ENCODE measurements at regions of chr3 and their contacts with region 1.

Region 1: DNA sequence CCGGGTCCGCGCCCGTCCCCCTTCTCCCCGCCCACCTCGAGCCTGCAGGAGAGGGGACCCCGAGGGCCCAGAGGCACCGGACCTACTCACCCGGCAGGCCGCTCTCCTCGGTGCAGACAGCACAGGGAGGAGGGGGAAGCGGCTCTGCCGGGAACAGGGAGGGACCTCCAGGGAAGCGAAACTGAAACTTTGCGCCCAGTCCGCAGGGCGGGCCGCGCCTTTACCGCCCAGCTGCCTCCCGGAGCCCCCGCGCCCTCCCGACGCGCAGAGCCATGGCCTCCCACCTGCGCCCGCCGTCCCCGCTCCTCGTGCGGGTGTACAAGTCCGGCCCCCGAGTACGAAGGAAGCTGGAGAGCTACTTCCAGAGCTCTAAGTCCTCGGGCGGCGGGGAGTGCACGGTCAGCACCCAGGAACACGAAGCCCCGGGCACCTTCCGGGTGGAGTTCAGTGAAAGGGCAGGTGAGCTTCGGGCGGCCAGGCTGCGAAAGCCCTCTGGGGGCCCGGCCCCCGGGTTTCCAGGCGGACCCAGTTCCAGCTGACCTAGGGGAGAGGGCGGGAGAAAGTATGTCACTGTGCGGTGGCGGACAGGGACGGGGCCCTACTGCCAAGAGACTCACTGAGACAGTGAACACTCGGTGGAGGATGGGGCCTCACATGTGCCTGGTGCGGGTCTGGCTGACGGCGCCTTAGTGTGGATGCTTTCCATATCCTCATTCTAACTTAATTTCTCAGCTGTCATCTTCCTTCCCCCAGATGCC is at the starts of genes DTX3L and PARP9:
- DNase-seq: peak; percentile 47 to 95 (median 76)
- ATAC-seq: peak; percentile 91
- H3K4me3 ChIP-seq: peak within 1 kb of the TSS; percentile 92
- H3K4me3 Mint-ChIP-seq: peak within 1 kb of the TSS; percentile 95
- H3K27ac ChIP-seq: peak within 1 kb of the TSS; percentile 83 to 88
- H3K27ac Mint-ChIP-seq: peak within 1 kb of the TSS; percentile 89
- H3K4me1 ChIP-seq: peaks cover 67% of the 10 kb centered on the region
- H3K4me1 Mint-ChIP-seq: peaks cover 85% of the 10 kb centered on the region
- H3K27me3 ChIP-seq: no peaks in the 10 kb centered on the region
- H3K27me3 Mint-ChIP-seq: no peaks in the 10 kb centered on the region
- CTCF ChIP-seq: no peak
- total RNA-seq, gene DTX3L: 15.4 to 18.6 TPM
- total RNA-seq, gene PARP9: 13.2 to 14.4 TPM

Region 2: DNA sequence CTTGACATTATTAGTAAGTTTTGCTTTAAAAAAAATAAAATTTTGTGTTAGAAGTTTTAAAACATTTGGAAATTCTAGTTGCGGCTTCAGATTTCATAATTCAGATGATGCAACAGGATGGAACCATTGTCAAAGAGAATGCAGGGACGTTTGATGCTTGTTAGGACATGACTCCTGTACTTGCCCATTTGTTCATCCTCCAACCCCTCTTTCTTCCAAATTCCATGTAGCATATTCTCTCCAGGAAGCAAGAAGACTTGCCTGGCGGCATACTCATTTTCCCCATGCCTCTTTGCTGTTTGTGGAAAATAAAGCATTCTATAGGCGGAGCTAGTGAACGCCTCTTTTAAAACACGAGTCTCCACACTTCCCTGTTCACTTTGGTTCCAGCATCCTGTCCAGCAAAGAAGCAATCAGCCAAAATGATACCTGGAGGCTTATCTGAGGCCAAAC is 239.4 kb before region 1 on chr3 and contains the start of gene CSTA:
- CTCF ChIA-PET with region 1: no interaction called
- POLR2A ChIA-PET with region 1: no interaction called
- intact Hi-C with region 1: no loop called
- DNase-seq: peak in 1 of 14 experiments; percentile 21
- ATAC-seq: no peak
- H3K4me3 ChIP-seq: peak within 1 kb of the TSS; percentile 11
- H3K4me3 Mint-ChIP-seq: no peak within 1 kb of the TSS
- H3K27ac ChIP-seq: no peak within 1 kb of the TSS
- H3K27ac Mint-ChIP-seq: no peak within 1 kb of the TSS
- H3K4me1 ChIP-seq: peaks cover 15% of the 10 kb centered on the region
- H3K4me1 Mint-ChIP-seq: peaks cover 22% of the 10 kb centered on the region
- H3K27me3 ChIP-seq: no peaks in the 10 kb centered on the region
- H3K27me3 Mint-ChIP-seq: no peaks in the 10 kb centered on the region
- CTCF ChIP-seq: no peak
- total RNA-seq, gene CSTA: 1.2 to 1.4 TPM

Region 3: DNA sequence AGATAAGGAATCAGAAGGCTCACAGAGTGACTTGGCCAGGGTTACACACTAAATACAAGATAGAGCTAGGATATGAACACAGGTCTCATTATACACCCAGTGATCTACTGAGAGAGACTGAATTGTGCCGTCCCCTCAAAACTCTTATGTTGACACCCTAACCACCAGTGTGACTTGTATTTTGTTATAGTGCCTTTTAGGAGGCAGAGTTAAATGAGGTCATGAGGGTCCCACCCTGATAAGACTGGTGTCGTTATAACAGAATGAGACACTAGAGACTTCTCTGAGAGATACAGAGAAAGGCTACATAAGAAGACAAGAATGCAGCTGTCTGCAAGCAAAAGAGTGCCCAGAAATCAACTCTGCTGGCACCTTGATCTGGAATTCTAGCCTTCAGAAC is 62.2 kb before region 1 on chr3:
- CTCF ChIA-PET with region 1: no interaction called
- POLR2A ChIA-PET with region 1: no interaction called
- intact Hi-C with region 1: no loop called
- DNase-seq: no peak
- ATAC-seq: no peak
- H3K4me3 ChIP-seq: no peak overlapping the region
- H3K4me3 Mint-ChIP-seq: no peak overlapping the region
- H3K27ac ChIP-seq: no peak overlapping the region
- H3K27ac Mint-ChIP-seq: no peak overlapping the region
- H3K4me1 ChIP-seq: peaks cover 12% of the 10 kb centered on the region
- H3K4me1 Mint-ChIP-seq: peaks cover 82% of the 10 kb centered on the region
- H3K27me3 ChIP-seq: no peaks in the 10 kb centered on the region
- H3K27me3 Mint-ChIP-seq: no peaks in the 10 kb centered on the region
- CTCF ChIP-seq: no peak

Region 4: DNA sequence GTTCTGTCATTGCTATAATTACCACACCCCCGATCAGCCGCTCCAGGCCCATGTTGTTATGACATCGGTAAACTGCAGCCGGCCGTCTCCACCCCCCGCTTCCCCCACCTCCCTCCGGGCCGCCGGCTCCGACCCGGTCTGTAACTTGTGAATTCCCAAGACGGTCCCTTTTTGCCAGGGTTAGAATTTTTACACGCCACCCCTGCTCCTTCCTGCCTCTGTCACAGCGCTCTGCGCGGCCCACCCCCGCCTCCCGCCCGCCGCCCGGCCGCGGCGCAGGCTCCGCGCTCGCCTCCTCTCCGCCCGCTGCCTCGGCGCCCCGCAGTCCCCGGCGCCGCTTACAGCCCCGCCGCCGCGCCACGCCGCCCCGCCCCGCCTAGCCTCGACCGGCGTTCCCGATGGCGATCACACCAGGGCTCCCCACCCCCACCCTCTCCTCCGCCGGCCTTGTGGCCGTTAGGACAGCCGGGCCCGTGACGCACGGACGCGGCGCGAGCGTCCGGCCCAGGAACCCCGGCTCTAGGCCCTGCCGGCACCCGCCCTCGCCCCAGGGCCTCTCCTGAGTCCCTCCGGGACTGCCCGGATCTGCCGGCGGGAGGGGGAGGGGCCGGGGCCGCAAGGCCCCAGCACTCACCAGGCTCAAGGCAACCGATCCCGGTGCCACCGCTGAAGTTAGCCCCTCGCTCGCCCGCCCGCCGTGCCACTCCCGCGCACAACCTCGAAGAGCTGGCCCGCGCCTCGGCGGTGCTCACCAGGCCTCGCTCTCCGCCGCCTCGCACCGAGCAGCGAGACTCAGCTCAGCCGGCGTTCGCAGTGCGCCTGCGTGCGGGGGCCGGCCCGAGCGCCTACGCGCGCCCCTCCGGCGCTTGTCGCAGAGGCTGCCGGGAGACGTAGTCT is 50.0 kb before region 1 on chr3 and contains the start of gene KPNA1:
- CTCF ChIA-PET with region 1: no interaction called
- POLR2A ChIA-PET with region 1: interaction called, 10 read pairs
- intact Hi-C with region 1: no loop called
- DNase-seq: peak; percentile 70 to 95 (median 82)
- ATAC-seq: peak; percentile 85
- H3K4me3 ChIP-seq: peak within 1 kb of the TSS; percentile 68
- H3K4me3 Mint-ChIP-seq: peak within 1 kb of the TSS; percentile 89
- H3K27ac ChIP-seq: peak within 1 kb of the TSS; percentile 83 to 97
- H3K27ac Mint-ChIP-seq: peak within 1 kb of the TSS; percentile 82
- H3K4me1 ChIP-seq: peaks cover 17% of the 10 kb centered on the region
- H3K4me1 Mint-ChIP-seq: peaks cover 44% of the 10 kb centered on the region
- H3K27me3 ChIP-seq: no peaks in the 10 kb centered on the region
- H3K27me3 Mint-ChIP-seq: no peaks in the 10 kb centered on the region
- CTCF ChIP-seq: no peak
- total RNA-seq, gene KPNA1: 46.2 to 49.8 TPM

Region 5: DNA sequence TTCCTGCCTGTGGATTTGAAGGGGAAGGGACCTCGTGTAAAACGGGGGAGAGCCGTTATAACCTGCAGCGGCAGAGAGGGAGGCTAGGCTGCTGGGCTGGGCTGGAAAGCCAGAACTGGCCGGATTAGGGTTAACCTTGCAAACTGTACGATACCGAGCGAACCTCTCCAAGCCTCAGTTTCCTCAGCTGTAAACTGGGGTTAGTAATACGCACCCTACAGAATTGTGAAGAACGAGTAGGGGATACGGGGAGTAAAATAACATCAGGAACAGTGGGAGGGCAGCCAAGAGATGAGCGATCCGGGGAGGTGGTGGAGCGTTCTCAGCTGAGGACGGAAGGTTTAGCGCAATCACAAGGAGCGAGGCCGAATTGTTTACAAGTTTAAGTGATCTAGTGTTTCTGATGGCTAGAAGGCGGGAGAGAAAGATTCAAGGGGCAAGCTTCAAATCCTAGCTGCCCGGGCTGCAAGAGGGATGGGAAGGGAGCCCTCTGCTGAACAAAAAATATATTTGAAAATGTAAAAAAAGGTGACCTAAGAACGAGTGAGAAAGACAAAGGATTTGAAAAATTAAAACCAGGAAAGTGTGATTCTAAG is 464.0 kb after region 1 on chr3:
- CTCF ChIA-PET with region 1: no interaction called
- POLR2A ChIA-PET with region 1: no interaction called
- intact Hi-C with region 1: loop called in 1 of 2 experiments (anchors 5 kb)
- DNase-seq: peak in 5 of 14 experiments; percentile 5 to 55 (median 46)
- ATAC-seq: peak; percentile 34
- H3K4me3 ChIP-seq: peak overlapping the region; percentile 58
- H3K4me3 Mint-ChIP-seq: peak overlapping the region; percentile 81
- H3K27ac ChIP-seq: no peak overlapping the region
- H3K27ac Mint-ChIP-seq: no peak overlapping the region
- H3K4me1 ChIP-seq: peaks cover 24% of the 10 kb centered on the region
- H3K4me1 Mint-ChIP-seq: peaks cover 12% of the 10 kb centered on the region
- H3K27me3 ChIP-seq: peaks cover 79 to 89% of the 10 kb centered on the region in 2 experiments
- H3K27me3 Mint-ChIP-seq: peaks cover 60% of the 10 kb centered on the region
- CTCF ChIP-seq: peak; percentile 43

Region 6: DNA sequence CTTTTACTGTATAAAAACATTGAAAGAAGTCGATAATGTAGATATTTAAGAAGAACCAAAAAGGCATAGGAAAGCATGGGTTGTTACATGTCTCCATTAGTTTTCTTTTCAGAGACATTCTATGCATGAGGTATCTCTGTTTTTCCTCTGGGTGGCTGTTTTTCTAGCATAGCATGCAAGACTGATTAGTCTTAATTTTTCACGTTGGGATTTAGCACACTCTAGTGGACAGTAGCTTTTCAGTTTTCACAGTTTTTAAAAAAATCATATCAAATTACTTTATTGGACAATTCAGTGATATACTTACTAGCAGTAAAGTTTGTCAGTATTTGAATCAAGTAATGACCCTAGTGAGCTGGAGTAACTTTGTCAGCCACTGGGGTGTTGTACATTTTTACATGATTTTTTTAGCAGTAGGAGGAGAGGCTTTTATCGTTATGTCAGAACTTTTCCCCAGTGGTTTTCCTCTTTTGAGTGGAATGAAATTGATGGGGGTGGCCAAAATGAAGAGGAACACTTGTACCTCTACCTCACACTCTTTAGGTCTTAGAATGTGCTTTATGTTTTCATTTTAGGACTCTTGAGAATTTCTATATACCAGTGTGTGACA is 694.6 kb after region 1 on chr3:
- CTCF ChIA-PET with region 1: no interaction called
- POLR2A ChIA-PET with region 1: no interaction called
- intact Hi-C with region 1: loop called in 1 of 2 experiments (anchors 5 kb)
- DNase-seq: peak in 3 of 14 experiments; percentile 37 to 48 (median 45)
- ATAC-seq: peak; percentile 77
- H3K4me3 ChIP-seq: no peak overlapping the region
- H3K4me3 Mint-ChIP-seq: no peak overlapping the region
- H3K27ac ChIP-seq: no peak overlapping the region
- H3K27ac Mint-ChIP-seq: no peak overlapping the region
- H3K4me1 ChIP-seq: no peaks in the 10 kb centered on the region
- H3K4me1 Mint-ChIP-seq: no peaks in the 10 kb centered on the region
- H3K27me3 ChIP-seq: no peaks in the 10 kb centered on the region
- H3K27me3 Mint-ChIP-seq: no peaks in the 10 kb centered on the region
- CTCF ChIP-seq: peak; percentile 44